Astrocyte of the cerebellum (primary cell): ENCODE measurements at regions of chr3 and their contacts with region 1.

Region 1: DNA sequence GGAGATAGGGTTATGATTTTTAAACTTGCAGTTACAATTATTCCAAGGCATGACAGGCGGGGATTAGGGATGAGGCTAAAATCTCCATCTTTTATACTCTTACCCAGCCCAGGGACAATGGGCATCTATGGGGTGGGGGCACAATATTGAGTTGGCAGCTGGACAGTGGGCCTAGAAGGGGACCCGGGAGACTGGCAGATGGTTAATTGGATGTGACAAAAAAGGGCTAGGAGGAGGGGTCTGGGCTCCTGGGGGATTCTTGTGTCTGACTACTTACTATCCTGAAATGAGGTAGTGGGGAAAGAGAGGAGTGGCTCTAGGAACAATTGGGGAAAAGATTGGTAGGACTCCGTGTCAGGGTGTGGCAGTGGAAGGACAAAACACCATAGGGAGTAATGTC is 53.0 kb upstream of the ROPN1 start:
- DNase-seq: no peak
- H3K4me3 ChIP-seq: no peak overlapping the region
- CTCF ChIP-seq: no peak

Region 2: GRCh38 chr3:124078953-124079911 is 34.3 kb after region 1 on chr3:
- in situ Hi-C with region 1: loop called (anchors 5 kb)
- DNase-seq: peak; percentile 24
- H3K4me3 ChIP-seq: no peak overlapping the region
- CTCF ChIP-seq: peak; percentile 76